ENCODE measurements at regions of chr3 and their contacts with region 1.

Region 1: DNA sequence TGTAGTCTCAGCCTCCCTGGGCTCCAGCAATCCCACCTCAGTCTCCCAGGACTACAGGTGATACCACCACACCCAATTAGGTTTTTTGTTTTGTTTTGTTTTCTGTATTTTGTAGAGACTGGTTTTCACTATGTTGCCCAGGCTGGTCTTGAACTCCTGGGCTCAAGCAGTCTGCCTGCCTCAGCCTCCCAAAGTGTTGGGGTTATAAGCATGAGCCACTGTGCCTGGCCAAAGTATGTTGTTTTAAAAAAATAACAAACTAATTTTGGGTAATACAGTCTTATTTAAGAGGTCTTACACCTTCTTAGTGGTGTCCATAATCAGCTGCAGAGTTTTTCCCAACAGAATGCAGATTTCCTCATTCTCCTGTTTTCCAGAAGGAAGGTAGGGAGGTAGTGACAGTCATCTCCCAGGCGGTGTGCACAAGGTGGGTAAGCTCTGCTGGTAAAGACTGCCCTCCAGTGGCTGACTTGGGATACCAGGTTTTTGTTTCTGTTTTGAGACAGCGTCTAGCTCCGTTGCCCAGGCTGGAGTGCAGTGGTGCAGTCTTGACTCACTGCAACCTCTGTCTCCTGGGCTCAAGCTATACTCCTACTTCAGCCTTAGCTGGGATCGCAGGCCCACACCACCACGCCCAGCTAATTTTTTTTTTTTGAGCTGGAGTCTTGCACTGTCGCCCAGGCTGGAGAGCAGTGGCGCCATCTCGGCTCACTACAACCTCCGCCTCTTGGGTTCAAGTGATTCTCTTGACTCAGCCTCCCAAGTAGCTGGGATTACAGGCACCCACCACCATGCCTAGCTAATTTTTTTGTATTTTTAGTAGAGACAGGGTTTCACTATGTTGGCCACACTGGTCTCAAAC is 58.4 kb downstream of the MAP6D1 start:
- DNase-seq: peak; percentile 53
- ATAC-seq: peak; percentile 99
- H3K4me3 ChIP-seq: no peak overlapping the region
- H3K27ac ChIP-seq: no peak overlapping the region
- H3K4me1 ChIP-seq: no peaks in the 10 kb centered on the region
- H3K27me3 ChIP-seq: no peaks in the 10 kb centered on the region
- CTCF ChIP-seq: peak; percentile 70 to 81 (median 80)
- POLR2A ChIP-seq: no peak
- RAD21 ChIP-seq: peak; percentile 89

Region 2: DNA sequence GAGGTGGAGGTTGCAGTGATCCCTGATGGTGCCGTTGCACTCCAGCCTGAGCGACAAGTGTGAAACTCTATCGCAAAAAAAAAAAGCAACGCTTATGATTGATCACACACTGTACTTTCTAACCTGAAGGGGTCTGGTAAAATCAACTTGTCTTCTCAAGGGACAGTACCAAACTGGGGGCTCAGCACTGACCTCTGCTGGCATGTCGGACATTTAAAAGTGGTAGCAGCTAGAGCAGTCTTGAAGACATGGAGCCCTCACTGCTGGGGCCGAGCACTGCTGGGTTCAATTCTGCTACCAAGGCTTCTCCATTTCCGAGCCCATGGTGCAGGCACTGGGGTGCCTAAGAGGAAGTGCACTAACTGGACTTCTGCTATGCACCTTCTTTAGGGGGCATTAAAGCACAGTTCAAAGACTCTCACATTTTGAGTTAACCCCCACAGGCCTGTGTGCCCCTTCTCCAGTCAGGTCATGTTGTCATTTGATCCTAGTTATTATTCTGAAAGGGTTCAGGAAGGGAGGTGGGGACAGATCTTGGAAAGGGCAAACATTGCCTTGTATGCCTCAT is 578.0 kb before region 1 on chr3:
- CTCF ChIA-PET with region 1: interaction called, 11 read pairs
- POLR2A ChIA-PET with region 1: no interaction called
- RAD21 ChIA-PET with region 1: interaction called in 1 of 2 experiments, 4 read pairs
- intact Hi-C with region 1: loop called (anchors 2 kb)
- DNase-seq: peak; percentile 23
- ATAC-seq: peak; percentile 92
- H3K4me3 ChIP-seq: no peak overlapping the region
- H3K27ac ChIP-seq: no peak overlapping the region
- H3K4me1 ChIP-seq: no peaks in the 10 kb centered on the region
- H3K27me3 ChIP-seq: no peaks in the 10 kb centered on the region
- CTCF ChIP-seq: peak; percentile 36 to 70 (median 59); a peak in 5 of 6 replicates
- POLR2A ChIP-seq: no peak
- RAD21 ChIP-seq: peak; percentile 43; the same call in 1 of the 2 replicates

Region 3: GRCh38 chr3:183481582-183481981 is 285.4 kb before region 1 on chr3:
- CTCF ChIA-PET with region 1: interaction called, 15 read pairs
- POLR2A ChIA-PET with region 1: no interaction called
- RAD21 ChIA-PET with region 1: no interaction called
- intact Hi-C with region 1: no loop called
- DNase-seq: no peak
- ATAC-seq: no peak
- H3K4me3 ChIP-seq: no peak overlapping the region
- H3K27ac ChIP-seq: no peak overlapping the region
- H3K4me1 ChIP-seq: peaks cover 0 to 4% of the 10 kb centered on the region in 2 experiments; a peak in 2 of 4 replicates
- H3K27me3 ChIP-seq: no peaks in the 10 kb centered on the region
- CTCF ChIP-seq: no peak
- POLR2A ChIP-seq: no peak
- RAD21 ChIP-seq: no peak